Uterus (tissue), 4 donors: ENCODE measurements at regions of chr16 and their contacts with region 1.

Region 1: GRCh38 chr16:69150146-69150865 is 17.9 kb downstream of the UTP4 start:
- DNase-seq: peak; percentile 43 to 78
- H3K4me3 ChIP-seq: no peak overlapping the region
- H3K27ac ChIP-seq: peak overlapping the region in 1 of 2 donors; percentile 14
- H3K4me1 ChIP-seq: no peaks in the 10 kb centered on the region
- H3K27me3 ChIP-seq: no peaks in the 10 kb centered on the region
- CTCF ChIP-seq: peak; percentile 72 to 93 (median 85)
- POLR2A ChIP-seq: no peak

Region 2: GRCh38 chr16:69276148-69277115 is 126.1 kb after region 1 on chr16:
- intact Hi-C with region 1: loop called (anchors 5 kb)
- DNase-seq: peak; percentile 71 to 85
- H3K4me3 ChIP-seq: no peak overlapping the region
- H3K27ac ChIP-seq: peak overlapping the region; percentile 69 to 72
- H3K4me1 ChIP-seq: peaks cover 4 to 6% of the 10 kb centered on the region in 2 donors
- H3K27me3 ChIP-seq: no peaks in the 10 kb centered on the region
- CTCF ChIP-seq: no peak
- POLR2A ChIP-seq: no peak

Region 3: GRCh38 chr16:69286941-69287713 is 136.8 kb after region 1 on chr16:
- intact Hi-C with region 1: loop called (anchors 5 kb)
- DNase-seq: peak; percentile 75 to 77
- H3K4me3 ChIP-seq: no peak overlapping the region
- H3K27ac ChIP-seq: peak overlapping the region; percentile 30 to 53
- H3K4me1 ChIP-seq: peaks cover 0 to 11% of the 10 kb centered on the region in 2 donors
- H3K27me3 ChIP-seq: no peaks in the 10 kb centered on the region
- CTCF ChIP-seq: peak; percentile 57 to 75 (median 69)
- POLR2A ChIP-seq: no peak